Astrocyte of the cerebellum (primary cell): ENCODE measurements at regions of chr9 and their contacts with region 1.

Region 1: DNA sequence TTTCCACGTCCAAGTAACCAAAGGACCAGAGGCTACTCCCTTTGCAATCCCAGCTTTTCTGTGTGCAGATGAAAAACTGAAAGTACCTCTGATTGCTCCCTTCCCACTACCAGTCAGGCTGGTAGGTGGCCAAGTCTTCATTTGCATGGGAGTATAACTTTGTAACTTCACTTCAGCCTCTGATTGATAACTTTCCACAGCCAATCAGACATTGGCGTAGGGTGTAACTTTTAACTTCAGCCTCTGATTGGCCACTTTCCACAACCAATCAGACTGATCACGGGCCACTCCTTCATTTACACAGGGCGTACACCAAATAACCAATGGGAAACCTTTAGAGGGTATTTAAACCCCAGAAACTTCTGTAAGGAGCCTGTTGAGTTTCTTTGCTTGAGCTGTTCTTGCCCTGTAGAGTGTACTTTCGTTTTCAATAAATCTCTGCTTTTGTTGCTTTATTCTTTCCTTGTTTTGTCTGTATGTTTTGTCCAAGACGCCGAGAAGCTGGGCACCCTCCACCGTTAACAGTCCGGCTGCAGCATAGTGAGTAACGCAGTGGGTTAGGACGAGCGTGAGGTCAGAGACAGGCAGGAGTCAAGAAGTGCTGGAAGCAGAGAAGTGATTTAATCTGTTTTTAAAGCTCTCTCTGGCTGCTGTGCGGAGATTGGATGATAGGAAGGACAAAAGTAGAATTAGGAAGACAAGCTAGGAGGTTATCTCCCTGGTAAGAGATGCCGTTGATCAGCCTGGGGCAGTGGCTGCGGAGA is 3.5 kb upstream of the EXOSC2 start:
- DNase-seq: peak; percentile 85
- H3K4me3 ChIP-seq: no peak overlapping the region
- CTCF ChIP-seq: no peak

Region 2: GRCh38 chr9:130599625-130600024 is 90.5 kb before region 1 on chr9:
- in situ Hi-C with region 1: loop called (anchors 5 kb)
- DNase-seq: no peak
- H3K4me3 ChIP-seq: no peak overlapping the region
- CTCF ChIP-seq: no peak

Region 3: GRCh38 chr9:130640681-130641080 is 49.4 kb before region 1 on chr9:
- in situ Hi-C with region 1: no loop called
- DNase-seq: no peak
- H3K4me3 ChIP-seq: no peak overlapping the region
- CTCF ChIP-seq: no peak